Adrenal gland (tissue), 19 donors: ENCODE measurements at regions of chr1 and their contacts with region 1.

Region 1: DNA sequence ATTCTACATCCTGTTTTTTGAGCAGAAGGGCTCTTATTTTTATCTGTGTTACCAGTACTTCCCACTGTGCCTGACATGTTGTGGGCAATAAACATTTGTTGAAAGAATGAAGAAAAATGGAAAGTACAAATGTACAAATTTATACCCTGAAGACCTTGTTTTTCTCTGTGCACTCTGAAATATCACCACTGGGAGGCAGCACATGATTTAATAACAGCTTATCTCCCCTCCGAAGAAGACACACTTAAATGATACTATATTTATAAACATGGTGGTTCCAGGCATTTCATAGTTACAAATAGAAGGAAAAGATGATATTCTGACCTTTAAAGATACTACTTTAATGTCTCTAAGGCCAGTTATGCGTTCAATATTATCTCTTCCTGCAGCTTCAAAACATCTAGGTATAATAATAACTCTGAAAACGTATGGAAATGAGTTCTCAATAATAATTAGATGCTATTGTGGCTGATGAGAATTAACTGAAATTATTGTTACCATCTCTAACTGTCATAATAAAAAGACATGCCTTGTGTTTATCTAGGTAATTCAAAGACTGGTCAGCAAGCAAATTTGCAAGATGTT is 12.8 kb downstream of the DYNLT5 start:
- DNase-seq: peak; percentile 20 to 71 (median 51)
- H3K4me3 ChIP-seq: no peak overlapping the region
- H3K27ac ChIP-seq: no peak overlapping the region
- H3K4me1 ChIP-seq: no peaks in the 10 kb centered on the region
- H3K27me3 ChIP-seq: no peaks in the 10 kb centered on the region
- CTCF ChIP-seq: peak; percentile 56 to 84 (median 74)
- POLR2A ChIP-seq: no peak

Region 2: DNA sequence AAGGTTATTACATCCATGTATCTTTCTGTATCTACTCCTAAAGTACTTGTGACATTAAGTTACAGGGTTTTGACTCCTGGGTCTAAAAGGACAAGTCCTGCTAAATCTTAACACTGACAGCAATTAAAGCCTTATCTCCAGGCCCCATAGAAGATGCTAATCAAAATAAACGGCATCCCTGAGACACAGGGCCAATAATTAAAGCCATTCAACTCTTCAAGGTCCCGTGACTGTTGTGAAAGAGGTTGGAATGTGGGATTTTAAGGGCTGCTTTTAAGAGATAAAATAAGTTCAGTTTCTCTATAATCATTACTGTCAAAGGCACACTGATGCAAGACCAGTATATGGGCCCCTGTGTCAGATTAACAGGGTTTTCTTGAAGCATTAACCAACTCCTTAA is 151.2 kb after region 1 on chr1:
- intact Hi-C with region 1: loop called in 1 of 2 experiments (anchors 10 kb)
- DNase-seq: peak in 1 of 7 donors; percentile 40
- H3K4me3 ChIP-seq: no peak overlapping the region
- H3K27ac ChIP-seq: no peak overlapping the region
- H3K4me1 ChIP-seq: peaks cover 0 to 14% of the 10 kb centered on the region in 2 donors
- H3K27me3 ChIP-seq: no peaks in the 10 kb centered on the region
- CTCF ChIP-seq: no peak
- POLR2A ChIP-seq: no peak

Region 3: GRCh38 chr1:66996018-66996682 is 231.1 kb after region 1 on chr1:
- intact Hi-C with region 1: loop called in 1 of 2 experiments (anchors 10 kb)
- DNase-seq: peak; percentile 54 to 87 (median 62)
- H3K4me3 ChIP-seq: no peak overlapping the region
- H3K27ac ChIP-seq: no peak overlapping the region
- H3K4me1 ChIP-seq: no peaks in the 10 kb centered on the region
- H3K27me3 ChIP-seq: no peaks in the 10 kb centered on the region
- CTCF ChIP-seq: peak; percentile 52 to 78 (median 73)
- POLR2A ChIP-seq: no peak

Region 4: GRCh38 chr1:67149179-67149770 is 384.2 kb after region 1 on chr1:
- intact Hi-C with region 1: loop called (anchors 5 to 10 kb)
- DNase-seq: peak; percentile 69 to 85 (median 78)
- H3K4me3 ChIP-seq: peak overlapping the region in 1 of 4 donors; percentile 1
- H3K27ac ChIP-seq: no peak overlapping the region
- H3K4me1 ChIP-seq: peaks cover 0 to 6% of the 10 kb centered on the region in 2 donors
- H3K27me3 ChIP-seq: no peaks in the 10 kb centered on the region
- CTCF ChIP-seq: peak; percentile 37 to 95 (median 82)
- POLR2A ChIP-seq: no peak

Region 5: DNA sequence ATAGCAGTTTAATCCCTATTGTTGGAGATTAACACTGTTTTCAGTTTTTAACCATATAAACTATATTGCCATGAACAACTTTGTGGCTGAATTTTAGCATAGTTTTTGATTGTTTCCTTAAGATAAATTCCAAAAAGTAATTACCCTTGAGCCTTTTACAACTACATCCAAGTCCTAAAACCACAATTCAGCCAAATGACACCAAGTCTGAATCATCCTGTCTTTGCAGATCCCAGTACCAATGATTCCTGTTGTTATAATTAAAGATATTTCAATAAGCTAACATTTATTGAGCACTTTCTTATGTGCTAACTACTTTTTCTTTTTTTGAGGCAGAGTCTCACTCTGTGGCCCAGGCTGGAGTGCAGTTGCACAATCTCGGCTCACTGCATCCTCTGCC is 436.8 kb after region 1 on chr1:
- intact Hi-C with region 1: loop called in 1 of 2 experiments (anchors 10 kb)
- DNase-seq: no peak
- H3K4me3 ChIP-seq: no peak overlapping the region
- H3K27ac ChIP-seq: no peak overlapping the region
- H3K4me1 ChIP-seq: no peaks in the 10 kb centered on the region
- H3K27me3 ChIP-seq: no peaks in the 10 kb centered on the region
- CTCF ChIP-seq: no peak
- POLR2A ChIP-seq: no peak